ENCODE measurements at regions of chr6 and their contacts with region 1.

Region 1: GRCh38 chr6:31680840-31681671 is at the start of gene LY6G5C:
- DNase-seq: peak; percentile 47 to 91
- H3K4me3 ChIP-seq: peak within 1 kb of the TSS; percentile 62 to 86
- H3K27ac ChIP-seq: peak within 1 kb of the TSS; percentile 62 to 64
- H3K4me1 ChIP-seq: peaks cover 2 to 5% of the 10 kb centered on the region in 2 donors
- H3K27me3 ChIP-seq: no peaks in the 10 kb centered on the region
- CTCF ChIP-seq: peak; percentile 81 to 83 (median 82)
- total RNA-seq, gene LY6G5C: 0.96 TPM

Region 2: DNA sequence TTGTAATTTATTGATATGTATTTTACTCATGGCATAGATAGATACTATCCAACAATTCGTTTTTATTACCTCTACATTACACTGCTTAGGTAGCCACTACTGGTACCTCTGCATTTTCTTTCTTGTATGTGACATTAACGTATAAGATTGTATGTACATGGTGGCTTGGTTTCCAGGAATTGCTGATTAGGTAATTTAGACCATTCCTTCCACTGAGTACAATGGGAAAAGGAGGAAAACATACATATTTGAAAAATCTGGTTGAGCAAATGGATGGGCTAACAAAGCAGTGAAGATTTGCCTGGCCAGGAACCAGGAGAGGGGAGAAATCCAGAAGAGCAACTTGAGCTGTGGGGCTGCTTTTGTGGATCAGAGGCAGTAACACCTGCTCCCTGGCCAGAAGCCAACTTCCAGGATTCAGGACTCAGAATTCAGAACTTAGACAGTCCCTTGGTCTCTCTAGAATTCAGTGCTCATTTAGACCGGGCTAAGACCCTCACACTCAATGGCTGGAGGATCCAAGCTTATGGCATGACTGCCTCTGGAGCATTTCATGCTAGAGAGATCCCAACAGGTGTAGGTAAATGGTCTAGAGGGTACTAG is 201.0 kb before region 1 on chr6:
- intact Hi-C with region 1: no loop called
- DNase-seq: no peak
- H3K4me3 ChIP-seq: no peak overlapping the region
- H3K27ac ChIP-seq: no peak overlapping the region
- H3K4me1 ChIP-seq: no peaks in the 10 kb centered on the region
- H3K27me3 ChIP-seq: no peaks in the 10 kb centered on the region
- CTCF ChIP-seq: no peak

Region 3: GRCh38 chr6:31769684-31770371 is 88.8 kb after region 1 on chr6:
- intact Hi-C with region 1: loop called (anchors 5 kb)
- DNase-seq: peak in 1 of 2 donors; percentile 25
- H3K4me3 ChIP-seq: no peak overlapping the region
- H3K27ac ChIP-seq: no peak overlapping the region
- H3K4me1 ChIP-seq: no peaks in the 10 kb centered on the region
- H3K27me3 ChIP-seq: no peaks in the 10 kb centered on the region
- CTCF ChIP-seq: peak; percentile 32 to 56 (median 54)

Region 4: DNA sequence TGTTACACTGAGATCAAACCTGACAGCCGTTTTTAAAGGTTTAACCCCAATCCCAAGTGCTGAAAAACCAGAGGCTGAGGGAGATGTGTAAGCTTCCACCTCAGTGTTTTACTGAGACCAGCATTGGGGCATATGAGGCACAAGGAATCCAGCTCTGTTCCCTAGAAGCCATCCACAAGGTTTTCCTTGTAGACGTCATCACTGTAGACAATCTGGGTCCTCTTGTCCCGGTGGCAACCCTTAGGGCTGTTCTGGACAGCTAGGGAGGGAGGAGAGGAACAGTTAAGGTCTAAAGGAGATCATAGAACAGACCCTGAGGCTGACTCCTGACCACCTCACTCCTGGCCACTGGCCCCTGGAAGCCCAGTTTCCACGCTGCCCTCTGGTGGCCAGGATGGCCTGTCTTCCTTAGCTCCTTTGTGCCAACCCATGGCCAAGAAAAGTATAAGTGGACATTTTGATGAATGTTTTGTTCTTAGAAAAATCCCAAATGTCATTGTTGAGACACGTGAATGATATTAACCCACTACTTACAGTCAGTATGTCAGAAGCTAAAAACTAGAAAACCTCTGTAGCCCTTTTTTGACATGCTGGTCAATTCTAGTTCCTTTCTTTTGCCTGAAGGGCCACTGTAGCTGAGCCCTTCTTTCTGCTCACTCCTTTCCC is 271.2 kb after region 1 on chr6:
- intact Hi-C with region 1: loop called (anchors 5 kb)
- DNase-seq: peak in 1 of 2 donors; percentile 82
- H3K4me3 ChIP-seq: no peak overlapping the region
- H3K27ac ChIP-seq: peak overlapping the region in 1 of 2 donors; percentile 11
- H3K4me1 ChIP-seq: peaks cover 0 to 1% of the 10 kb centered on the region in 2 donors
- H3K27me3 ChIP-seq: no peaks in the 10 kb centered on the region
- CTCF ChIP-seq: peak; percentile 56 to 63 (median 58)

Measured in ascending aorta (tissue), 2 donors.